GM12878 (cell line): ENCODE measurements at regions of chr5 and their contacts with region 1.

Region 1: GRCh38 chr5:164207646-164208045 is 702.2 kb downstream of the MAT2B start:
- DNase-seq: no peak
- ATAC-seq: no peak
- H3K4me3 ChIP-seq: no peak overlapping the region
- H3K27ac ChIP-seq: no peak overlapping the region
- H3K4me1 ChIP-seq: no peaks in the 10 kb centered on the region
- H3K27me3 ChIP-seq: no peaks in the 10 kb centered on the region
- CTCF ChIP-seq: no peak
- EP300 ChIP-seq: no peak
- POLR2A ChIP-seq: no peak
- RAD21 ChIP-seq: no peak

Region 2: GRCh38 chr5:164191240-164191639 is 16.4 kb before region 1 on chr5:
- CTCF ChIA-PET with region 1: interaction called, 4 read pairs
- POLR2A ChIA-PET with region 1: no interaction called
- RAD21 ChIA-PET with region 1: no interaction called
- SMC1A ChIA-PET with region 1: interaction called, 14 read pairs
- in situ Hi-C with region 1: no loop called
- intact Hi-C with region 1: no loop called
- DNase-seq: no peak
- ATAC-seq: no peak
- H3K4me3 ChIP-seq: no peak overlapping the region
- H3K27ac ChIP-seq: no peak overlapping the region
- H3K4me1 ChIP-seq: no peaks in the 10 kb centered on the region
- H3K27me3 ChIP-seq: no peaks in the 10 kb centered on the region
- CTCF ChIP-seq: no peak
- EP300 ChIP-seq: no peak
- POLR2A ChIP-seq: no peak
- RAD21 ChIP-seq: no peak

Region 3: GRCh38 chr5:164224772-164225171 is 17.1 kb after region 1 on chr5:
- CTCF ChIA-PET with region 1: interaction called, 5 read pairs
- POLR2A ChIA-PET with region 1: interaction called, 3 read pairs
- RAD21 ChIA-PET with region 1: interaction called, 3 read pairs
- SMC1A ChIA-PET with region 1: interaction called, 10 read pairs
- in situ Hi-C with region 1: no loop called
- intact Hi-C with region 1: no loop called
- DNase-seq: no peak
- ATAC-seq: no peak
- H3K4me3 ChIP-seq: no peak overlapping the region
- H3K27ac ChIP-seq: no peak overlapping the region
- H3K4me1 ChIP-seq: no peaks in the 10 kb centered on the region
- H3K27me3 ChIP-seq: no peaks in the 10 kb centered on the region
- CTCF ChIP-seq: no peak
- EP300 ChIP-seq: no peak
- POLR2A ChIP-seq: no peak
- RAD21 ChIP-seq: no peak

Region 4: GRCh38 chr5:164449460-164449859 is 241.8 kb after region 1 on chr5:
- CTCF ChIA-PET with region 1: no interaction called
- POLR2A ChIA-PET with region 1: no interaction called
- RAD21 ChIA-PET with region 1: no interaction called
- SMC1A ChIA-PET with region 1: no interaction called
- in situ Hi-C with region 1: no loop called
- intact Hi-C with region 1: no loop called
- DNase-seq: no peak
- ATAC-seq: no peak
- H3K4me3 ChIP-seq: no peak overlapping the region
- H3K27ac ChIP-seq: no peak overlapping the region
- H3K4me1 ChIP-seq: no peaks in the 10 kb centered on the region
- H3K27me3 ChIP-seq: no peaks in the 10 kb centered on the region
- CTCF ChIP-seq: no peak
- EP300 ChIP-seq: no peak
- POLR2A ChIP-seq: no peak
- RAD21 ChIP-seq: no peak